OCI-LY7 (cell line): ENCODE measurements at regions of chr3 and their contacts with region 1.

Region 1: GRCh38 chr3:42831321-42831713 is 22.1 kb downstream of the ACKR2 start:
- DNase-seq: peak; percentile 74
- H3K4me3 ChIP-seq: no peak overlapping the region
- H3K27ac ChIP-seq: no peak overlapping the region
- H3K4me1 ChIP-seq: no peaks in the 10 kb centered on the region
- CTCF ChIP-seq: peak; percentile 89

Region 2: DNA sequence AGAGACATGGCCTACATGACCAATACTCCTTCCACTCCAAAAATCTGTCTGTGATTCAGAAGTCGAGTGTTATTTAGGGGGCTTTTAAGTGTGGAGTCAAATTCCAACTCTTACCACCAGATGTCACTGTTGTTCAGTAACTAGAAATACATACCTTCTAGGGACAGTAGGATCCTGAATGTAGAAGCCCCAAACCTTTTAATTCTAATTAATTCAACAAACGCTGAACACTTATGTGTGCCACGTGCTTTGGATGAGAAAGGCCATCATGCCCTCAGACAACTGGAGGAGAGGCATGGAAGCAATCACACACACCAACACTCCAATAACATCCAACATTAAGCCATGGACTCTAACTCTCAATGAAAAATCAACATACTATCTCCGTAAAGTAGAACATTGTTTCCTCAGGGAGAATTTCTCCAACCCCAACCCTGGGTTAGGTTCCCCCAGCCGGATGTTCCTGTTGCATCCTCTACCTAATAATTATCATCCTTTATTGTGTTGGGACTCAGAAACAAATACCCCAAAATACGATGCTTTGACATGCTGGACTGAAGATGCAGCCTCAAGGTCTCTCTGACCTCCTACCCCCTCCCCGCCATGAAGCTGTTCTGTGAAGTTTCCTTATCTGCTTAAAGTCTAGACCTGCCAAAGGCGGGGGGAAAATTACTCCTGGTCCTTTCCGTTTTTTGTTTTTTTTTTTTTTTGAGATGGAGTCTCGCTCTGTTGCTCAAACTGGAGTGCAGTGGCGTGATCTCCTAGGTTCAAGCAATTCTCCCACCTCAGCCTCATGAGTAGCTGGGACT is 50.2 kb before region 1 on chr3:
- CTCF ChIA-PET with region 1: no interaction called
- POLR2A ChIA-PET with region 1: interaction called, 3 read pairs
- intact Hi-C with region 1: loop called (anchors 2 kb)
- DNase-seq: peak; percentile 76
- H3K4me3 ChIP-seq: no peak overlapping the region
- H3K27ac ChIP-seq: no peak overlapping the region
- H3K4me1 ChIP-seq: no peaks in the 10 kb centered on the region
- CTCF ChIP-seq: peak; percentile 91

Region 3: DNA sequence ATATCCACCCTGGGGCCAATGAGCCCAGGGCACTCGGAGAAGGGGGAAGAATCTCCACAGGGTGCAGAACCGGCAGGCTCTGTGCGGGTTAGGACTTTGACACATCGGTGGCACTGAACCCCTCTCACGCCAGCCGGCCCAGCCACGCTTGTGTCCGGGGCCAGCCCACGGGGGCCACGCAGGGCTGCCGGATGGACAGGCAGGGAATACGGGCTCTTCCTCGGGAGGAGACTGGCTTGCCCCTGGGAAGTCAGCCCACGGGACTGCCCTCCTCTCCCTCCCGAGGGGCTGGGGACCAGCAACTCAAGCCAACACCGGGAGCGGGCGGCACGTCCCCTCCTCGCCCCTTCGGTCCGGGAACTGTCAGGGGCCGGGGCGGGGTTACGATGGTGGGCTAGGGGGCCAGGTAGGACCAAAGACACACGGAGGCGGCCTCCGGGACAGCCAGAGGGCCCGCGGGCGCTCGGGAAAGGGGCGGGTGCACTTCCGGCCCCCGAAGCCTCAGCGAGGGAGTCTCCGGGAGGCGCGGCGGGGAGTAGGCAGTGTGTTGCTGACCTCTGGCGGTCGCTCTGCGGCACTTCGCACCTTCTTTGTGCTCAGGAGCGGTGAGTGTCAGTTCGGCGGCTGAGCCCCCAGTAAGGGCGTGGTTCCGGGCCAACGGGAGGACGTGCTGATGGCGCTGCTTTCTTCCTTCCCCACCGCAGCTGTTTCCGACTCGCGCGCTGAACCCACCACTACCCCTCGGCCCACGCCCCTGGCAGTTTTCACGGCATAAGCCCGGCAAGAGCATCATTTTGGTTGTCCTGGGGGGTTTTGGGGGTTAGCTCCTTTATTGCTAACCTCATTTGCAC is 49.5 kb after region 1 on chr3:
- CTCF ChIA-PET with region 1: interaction called, 10 read pairs
- POLR2A ChIA-PET with region 1: interaction called, 3 read pairs
- intact Hi-C with region 1: loop called (anchors 1 kb)
- DNase-seq: peak; percentile 92
- H3K4me3 ChIP-seq: peak overlapping the region; percentile 68
- H3K27ac ChIP-seq: no peak overlapping the region
- H3K4me1 ChIP-seq: peaks cover 11% of the 10 kb centered on the region
- CTCF ChIP-seq: peak; percentile 79

Region 4: GRCh38 chr3:42906070-42906847 is 74.9 kb after region 1 on chr3 and contains the start of gene ZNF662:
- CTCF ChIA-PET with region 1: no interaction called
- POLR2A ChIA-PET with region 1: no interaction called
- intact Hi-C with region 1: no loop called
- DNase-seq: no peak
- H3K4me3 ChIP-seq: no peak within 1 kb of the TSS
- H3K27ac ChIP-seq: no peak within 1 kb of the TSS
- H3K4me1 ChIP-seq: no peaks in the 10 kb centered on the region
- CTCF ChIP-seq: no peak
- total RNA-seq, gene ZNF662: not detected in 2 replicates